ENCODE measurements at regions of chr4 and their contacts with region 1.

Region 1: DNA sequence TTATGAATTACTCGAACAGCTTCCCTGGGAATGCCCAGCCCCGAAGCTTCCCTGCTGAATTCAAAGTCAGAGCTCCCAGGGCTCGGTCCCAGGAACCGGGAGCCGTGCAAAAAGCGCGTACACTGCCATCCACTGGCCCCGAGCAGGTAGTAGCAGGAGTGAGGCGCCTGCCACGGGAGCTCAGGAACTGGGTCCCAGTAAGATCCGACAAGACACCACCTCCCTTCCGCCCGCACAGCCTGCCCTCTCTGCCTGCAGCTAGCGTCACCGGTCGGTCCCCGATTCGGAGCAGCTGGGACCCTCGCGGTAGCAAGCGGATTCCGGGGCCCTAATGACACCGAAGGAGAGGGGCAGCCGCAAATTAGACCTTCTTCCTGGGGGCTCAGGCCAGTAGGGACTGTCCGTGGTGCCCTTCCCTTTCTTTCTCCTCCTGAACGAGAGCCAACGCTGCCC is 1.2 kb downstream of the CORIN start:
- DNase-seq: peak; percentile 12 to 50 (median 31)
- ATAC-seq: peak; percentile 68
- H3K4me3 ChIP-seq: peak overlapping the region; percentile 68
- H3K4me3 Mint-ChIP-seq: peak overlapping the region; percentile 84 to 91 (median 88)
- H3K27ac ChIP-seq: no peak overlapping the region
- H3K27ac Mint-ChIP-seq: peak overlapping the region in 2 of 9 donors; percentile 9 to 17
- H3K4me1 ChIP-seq: peaks cover 6% of the 10 kb centered on the region in 2 donors
- H3K4me1 Mint-ChIP-seq: peaks cover 5 to 32% (median 24%) of the 10 kb centered on the region in 7 donors
- H3K27me3 ChIP-seq: no peaks in the 10 kb centered on the region
- H3K27me3 Mint-ChIP-seq: peaks cover 0 to 51% (median 11%) of the 10 kb centered on the region in 5 donors

Region 2: GRCh38 chr4:47668810-47669408 is 167.8 kb before region 1 on chr4:
- CTCF ChIA-PET with region 1: interaction called, 4 read pairs
- POLR2A ChIA-PET with region 1: no interaction called
- intact Hi-C with region 1: loop called (anchors 1 to 5 kb)
- DNase-seq: peak in 6 of 9 donors; percentile 13 to 40 (median 37)
- ATAC-seq: no peak
- H3K4me3 ChIP-seq: no peak overlapping the region
- H3K4me3 Mint-ChIP-seq: no peak overlapping the region
- H3K27ac ChIP-seq: no peak overlapping the region
- H3K27ac Mint-ChIP-seq: no peak overlapping the region
- H3K4me1 ChIP-seq: no peaks in the 10 kb centered on the region
- H3K4me1 Mint-ChIP-seq: no peaks in the 10 kb centered on the region
- H3K27me3 ChIP-seq: no peaks in the 10 kb centered on the region
- H3K27me3 Mint-ChIP-seq: peaks cover 7 to 34% (median 24%) of the 10 kb centered on the region in 5 donors

Region 3: DNA sequence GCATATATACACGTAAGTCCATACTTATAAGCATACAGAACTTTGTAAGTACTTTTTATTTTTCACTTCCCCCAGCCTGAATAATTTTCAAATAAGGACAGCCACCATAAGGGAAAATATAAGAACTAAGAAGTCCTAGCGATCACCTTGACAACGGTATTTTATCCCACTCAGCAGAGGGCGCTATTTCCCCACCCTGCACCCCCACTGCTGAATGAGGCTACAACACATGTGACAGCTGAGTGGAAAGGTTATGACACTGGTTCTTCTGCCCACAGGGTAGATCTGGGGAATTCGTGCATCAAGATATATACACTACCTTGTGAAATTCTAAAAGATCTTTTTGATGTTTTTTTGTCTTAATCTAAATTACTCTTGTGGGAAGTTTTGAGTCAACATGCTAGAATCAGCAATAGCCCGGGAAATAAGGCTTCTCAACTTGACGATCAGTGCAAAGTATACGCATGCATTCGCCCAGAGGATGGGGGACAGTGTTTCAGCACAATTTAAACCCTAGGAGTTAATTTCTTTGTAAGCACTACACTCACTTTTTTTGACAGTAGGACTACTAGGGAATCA is 150.3 kb before region 1 on chr4:
- CTCF ChIA-PET with region 1: interaction called, 6 read pairs
- POLR2A ChIA-PET with region 1: no interaction called
- intact Hi-C with region 1: loop called (anchors 1 kb)
- DNase-seq: peak; percentile 24 to 61 (median 48)
- ATAC-seq: peak; percentile 87
- H3K4me3 ChIP-seq: no peak overlapping the region
- H3K4me3 Mint-ChIP-seq: no peak overlapping the region
- H3K27ac ChIP-seq: no peak overlapping the region
- H3K27ac Mint-ChIP-seq: no peak overlapping the region
- H3K4me1 ChIP-seq: no peaks in the 10 kb centered on the region
- H3K4me1 Mint-ChIP-seq: no peaks in the 10 kb centered on the region
- H3K27me3 ChIP-seq: no peaks in the 10 kb centered on the region
- H3K27me3 Mint-ChIP-seq: peaks cover 0 to 27% (median 9%) of the 10 kb centered on the region in 5 donors

Region 4: DNA sequence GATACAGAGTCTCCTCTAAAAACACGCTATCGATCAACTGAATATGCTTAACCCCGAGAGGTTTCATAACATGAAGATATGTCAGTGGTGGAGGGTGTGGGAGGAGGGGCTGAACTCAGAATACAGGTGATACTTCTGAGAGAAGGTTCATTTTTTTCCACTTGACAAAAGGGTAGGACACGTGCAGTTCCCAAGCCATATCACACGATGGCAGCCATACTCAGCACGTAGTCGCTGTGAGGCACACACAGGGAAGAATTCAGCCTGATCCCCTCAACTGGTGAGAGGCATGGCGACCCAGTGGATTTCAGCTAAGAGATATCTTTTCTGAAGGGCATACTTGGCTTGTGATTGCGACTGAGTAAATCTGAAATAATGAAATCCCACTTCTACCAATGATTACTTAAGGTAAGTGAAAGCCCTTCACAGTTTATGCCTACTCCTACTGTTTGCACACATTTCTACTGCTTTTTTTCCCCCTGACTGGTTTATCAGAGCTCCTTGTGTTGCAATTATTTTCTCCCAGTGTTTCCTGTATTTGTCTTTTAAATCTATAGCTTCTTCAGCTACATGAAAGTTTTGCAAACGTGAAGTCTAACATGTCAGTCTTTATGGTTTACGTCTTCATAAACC is 131.9 kb before region 1 on chr4:
- CTCF ChIA-PET with region 1: no interaction called
- POLR2A ChIA-PET with region 1: no interaction called
- intact Hi-C with region 1: loop called (anchors 1 kb)
- DNase-seq: peak in 1 of 9 donors; percentile 8
- ATAC-seq: peak; percentile 38
- H3K4me3 ChIP-seq: no peak overlapping the region
- H3K4me3 Mint-ChIP-seq: no peak overlapping the region
- H3K27ac ChIP-seq: no peak overlapping the region
- H3K27ac Mint-ChIP-seq: no peak overlapping the region
- H3K4me1 ChIP-seq: no peaks in the 10 kb centered on the region
- H3K4me1 Mint-ChIP-seq: peaks cover 0 to 2% (median 0%) of the 10 kb centered on the region in 7 donors
- H3K27me3 ChIP-seq: peaks cover 0 to 3% of the 10 kb centered on the region in 2 donors
- H3K27me3 Mint-ChIP-seq: peaks cover 5 to 42% (median 28%) of the 10 kb centered on the region in 5 donors

Region 5: GRCh38 chr4:48269861-48270522 is 433.3 kb after region 1 on chr4:
- CTCF ChIA-PET with region 1: no interaction called
- POLR2A ChIA-PET with region 1: no interaction called
- intact Hi-C with region 1: loop called (anchors 2 to 5 kb)
- DNase-seq: peak; percentile 48 to 88 (median 69)
- ATAC-seq: peak; percentile 95
- H3K4me3 ChIP-seq: peak overlapping the region; percentile 88
- H3K4me3 Mint-ChIP-seq: peak overlapping the region; percentile 95 to 98 (median 97)
- H3K27ac ChIP-seq: peak overlapping the region; percentile 73
- H3K27ac Mint-ChIP-seq: peak overlapping the region; percentile 20 to 94 (median 86)
- H3K4me1 ChIP-seq: peaks cover 0 to 6% of the 10 kb centered on the region in 2 donors
- H3K4me1 Mint-ChIP-seq: peaks cover 6 to 28% (median 22%) of the 10 kb centered on the region in 7 donors
- H3K27me3 ChIP-seq: no peaks in the 10 kb centered on the region
- H3K27me3 Mint-ChIP-seq: no peaks in the 10 kb centered on the region

Measured in naive thymus-derived CD4-positive, alpha-beta T cell (primary cell).